ENCODE measurements at regions of chr17 and their contacts with region 1.

Region 1: GRCh38 chr17:48024937-48025906 is 12.4 kb downstream of the COPZ2 start:
- DNase-seq: peak; percentile 97 to 99
- H3K4me3 ChIP-seq: no peak overlapping the region
- CTCF ChIP-seq: peak in 1 of 3 donors; percentile 77
- POLR2A ChIP-seq: no peak

Region 2: DNA sequence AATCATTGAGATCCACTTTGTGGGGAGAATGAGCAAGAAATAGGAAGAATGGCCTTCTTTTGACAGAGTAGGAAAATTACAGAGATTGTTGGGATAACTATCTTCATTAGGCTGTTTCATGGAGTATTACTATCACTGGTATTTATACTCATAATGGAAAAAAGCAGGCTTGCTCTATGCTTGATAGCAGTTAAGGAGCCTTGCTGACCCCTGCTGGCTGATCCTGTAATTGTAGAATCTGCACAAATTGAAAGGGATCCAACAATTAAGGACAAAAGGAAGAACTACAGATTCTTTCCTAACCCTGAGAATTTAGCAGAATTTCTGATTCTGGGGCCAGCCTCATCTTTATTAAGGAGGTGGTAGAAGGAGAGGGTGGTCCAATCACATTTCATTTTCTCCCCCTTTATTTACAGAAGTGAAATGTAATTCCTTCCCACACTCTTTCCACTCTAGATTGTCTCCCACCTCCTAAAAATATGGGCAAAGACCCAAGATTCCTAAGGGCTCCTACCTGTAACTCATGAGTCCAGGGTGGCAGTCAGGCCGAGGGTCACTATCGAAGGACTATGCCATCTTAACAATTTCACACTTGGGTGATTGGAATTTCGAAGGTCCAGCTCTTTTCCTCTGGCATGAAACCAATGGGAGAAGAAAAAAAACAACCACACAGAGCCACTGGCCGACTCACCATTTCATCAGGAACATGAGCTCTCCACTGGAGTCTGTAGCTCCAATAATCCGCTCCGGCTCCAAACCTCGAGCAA is 49.3 kb after region 1 on chr17:
- intact Hi-C with region 1: loop called (anchors 2 kb)
- DNase-seq: peak in 1 of 2 donors; percentile 85
- H3K4me3 ChIP-seq: no peak overlapping the region
- CTCF ChIP-seq: peak in 1 of 3 donors; percentile 91
- POLR2A ChIP-seq: no peak

Region 3: DNA sequence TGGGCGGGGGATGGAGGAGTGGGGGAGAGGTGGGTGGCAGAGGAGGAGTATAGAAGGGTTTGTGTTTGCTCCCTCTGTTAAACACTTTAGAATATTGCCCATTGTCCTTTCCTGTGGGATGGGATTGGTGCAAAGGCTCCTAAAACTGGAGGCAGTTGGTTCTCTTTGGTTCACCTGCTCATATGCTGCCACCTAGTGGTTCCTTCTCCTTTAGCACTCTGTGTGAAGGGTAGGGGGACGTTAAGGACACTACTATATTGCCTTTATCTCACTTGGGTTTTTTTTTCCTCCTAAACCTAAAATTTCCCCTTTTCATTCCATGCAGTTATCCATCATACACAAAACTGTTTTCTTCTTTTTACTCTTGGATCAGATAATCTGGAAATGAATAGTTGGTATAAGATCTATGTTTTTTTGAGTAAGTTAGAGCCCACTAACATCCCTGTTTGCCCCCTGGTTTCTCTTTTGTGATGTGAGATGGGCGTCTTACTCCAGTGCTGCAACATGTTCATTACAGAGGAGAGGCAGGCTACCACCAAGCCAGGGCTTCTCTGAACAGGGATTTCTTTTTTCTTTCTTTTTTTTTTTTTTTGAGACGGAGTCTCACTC is 106.1 kb after region 1 on chr17:
- intact Hi-C with region 1: loop called (anchors 10 kb)
- DNase-seq: peak; percentile 52 to 63
- H3K4me3 ChIP-seq: no peak overlapping the region
- CTCF ChIP-seq: no peak
- POLR2A ChIP-seq: no peak

Measured in lower leg skin (tissue), 4 donors.